Right cardiac atrium (tissue), 5 donors: ENCODE measurements at regions of chr4 and their contacts with region 1.

Region 1: GRCh38 chr4:75724066-75724866 is at the start of gene USO1:
- DNase-seq: peak; percentile 99 to 100 (median 99)
- ATAC-seq: peak; percentile 99
- H3K4me3 ChIP-seq: peak within 1 kb of the TSS; percentile 75
- H3K27ac ChIP-seq: peak within 1 kb of the TSS; percentile 97
- H3K4me1 ChIP-seq: peaks cover 2% of the 10 kb centered on the region
- H3K27me3 ChIP-seq: no peaks in the 10 kb centered on the region
- total RNA-seq, gene USO1: 93.6 to 103 (median 99.1) TPM

Region 2: GRCh38 chr4:75673027-75673958 is 51.0 kb before region 1 on chr4 and contains the start of gene G3BP2:
- intact Hi-C with region 1: loop called (anchors 1 to 10 kb)
- DNase-seq: peak; percentile 99
- ATAC-seq: peak; percentile 100
- H3K4me3 ChIP-seq: peak within 1 kb of the TSS; percentile 65
- H3K27ac ChIP-seq: peak within 1 kb of the TSS; percentile 93
- H3K4me1 ChIP-seq: no peaks in the 10 kb centered on the region
- H3K27me3 ChIP-seq: no peaks in the 10 kb centered on the region
- total RNA-seq, gene G3BP2: 79.5 to 124 (median 86.8) TPM